A673 (cell line): ENCODE measurements at regions of chr9 and their contacts with region 1.

Region 1: GRCh38 chr9:69932901-69933300 is 110.7 kb upstream of the MAMDC2 start:
- DNase-seq: peak; percentile 60
- H3K4me3 ChIP-seq: no peak overlapping the region
- H3K27ac ChIP-seq: no peak overlapping the region
- H3K4me1 ChIP-seq: no peaks in the 10 kb centered on the region
- H3K27me3 ChIP-seq: peaks cover 3% of the 10 kb centered on the region
- CTCF ChIP-seq: peak; percentile 55

Region 2: GRCh38 chr9:69056191-69056815 is 876.6 kb before region 1 on chr9:
- CTCF ChIA-PET with region 1: interaction called, 7 read pairs
- POLR2A ChIA-PET with region 1: no interaction called
- intact Hi-C with region 1: loop called (anchors 5 kb)
- DNase-seq: no peak
- H3K4me3 ChIP-seq: no peak overlapping the region
- H3K27ac ChIP-seq: no peak overlapping the region
- H3K4me1 ChIP-seq: no peaks in the 10 kb centered on the region
- H3K27me3 ChIP-seq: no peaks in the 10 kb centered on the region
- CTCF ChIP-seq: no peak

Region 3: DNA sequence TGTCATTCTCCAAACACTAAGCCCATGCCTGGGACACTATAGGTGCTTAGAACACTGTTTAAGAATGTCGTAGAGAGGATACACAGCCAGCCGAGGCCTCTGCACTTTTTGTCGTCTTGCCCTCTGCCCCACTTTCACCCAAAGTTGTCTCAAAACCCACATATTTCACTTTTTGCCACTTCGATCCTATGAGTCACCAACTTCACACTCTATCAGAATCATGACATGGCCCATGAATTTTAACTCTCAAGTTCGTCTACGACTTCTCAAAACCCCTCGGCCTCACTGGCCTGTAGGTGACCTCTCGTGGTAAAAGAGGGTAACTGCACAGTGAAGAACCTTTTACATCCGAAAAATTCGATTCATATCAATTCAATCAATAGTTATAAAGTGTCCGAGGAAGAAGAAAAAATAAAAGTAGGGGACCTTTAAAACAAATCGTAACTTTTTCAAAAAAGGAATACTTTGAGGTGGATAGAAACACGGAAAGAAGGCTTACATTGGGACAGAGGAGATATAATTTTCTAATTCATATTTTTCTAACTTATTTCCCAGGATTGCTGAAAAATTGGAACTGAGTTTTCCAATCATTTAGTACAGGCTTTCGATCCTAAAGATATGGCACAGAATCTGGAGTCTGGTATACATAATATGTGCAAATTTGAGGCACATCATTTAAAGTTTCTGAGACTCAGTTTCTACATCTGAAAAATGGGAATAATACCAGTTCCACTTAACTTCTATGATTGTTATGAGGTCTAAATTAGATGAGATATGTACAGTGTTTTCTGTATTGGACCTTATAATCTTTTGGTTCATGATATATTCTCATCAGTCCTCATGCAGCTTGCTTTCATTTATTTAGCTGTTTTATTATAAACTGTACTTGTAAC is 383.3 kb before region 1 on chr9:
- CTCF ChIA-PET with region 1: no interaction called
- POLR2A ChIA-PET with region 1: interaction called, 5 read pairs
- intact Hi-C with region 1: loop called (anchors 5 kb)
- DNase-seq: peak; percentile 58
- H3K4me3 ChIP-seq: no peak overlapping the region
- H3K27ac ChIP-seq: no peak overlapping the region
- H3K4me1 ChIP-seq: no peaks in the 10 kb centered on the region
- H3K27me3 ChIP-seq: peaks cover 42% of the 10 kb centered on the region
- CTCF ChIP-seq: peak; percentile 82

Region 4: GRCh38 chr9:69885474-69885929 is 47.4 kb before region 1 on chr9:
- CTCF ChIA-PET with region 1: no interaction called
- POLR2A ChIA-PET with region 1: no interaction called
- intact Hi-C with region 1: no loop called
- DNase-seq: no peak
- H3K4me3 ChIP-seq: no peak overlapping the region
- H3K27ac ChIP-seq: no peak overlapping the region
- H3K4me1 ChIP-seq: no peaks in the 10 kb centered on the region
- H3K27me3 ChIP-seq: no peaks in the 10 kb centered on the region
- CTCF ChIP-seq: no peak

Region 5: DNA sequence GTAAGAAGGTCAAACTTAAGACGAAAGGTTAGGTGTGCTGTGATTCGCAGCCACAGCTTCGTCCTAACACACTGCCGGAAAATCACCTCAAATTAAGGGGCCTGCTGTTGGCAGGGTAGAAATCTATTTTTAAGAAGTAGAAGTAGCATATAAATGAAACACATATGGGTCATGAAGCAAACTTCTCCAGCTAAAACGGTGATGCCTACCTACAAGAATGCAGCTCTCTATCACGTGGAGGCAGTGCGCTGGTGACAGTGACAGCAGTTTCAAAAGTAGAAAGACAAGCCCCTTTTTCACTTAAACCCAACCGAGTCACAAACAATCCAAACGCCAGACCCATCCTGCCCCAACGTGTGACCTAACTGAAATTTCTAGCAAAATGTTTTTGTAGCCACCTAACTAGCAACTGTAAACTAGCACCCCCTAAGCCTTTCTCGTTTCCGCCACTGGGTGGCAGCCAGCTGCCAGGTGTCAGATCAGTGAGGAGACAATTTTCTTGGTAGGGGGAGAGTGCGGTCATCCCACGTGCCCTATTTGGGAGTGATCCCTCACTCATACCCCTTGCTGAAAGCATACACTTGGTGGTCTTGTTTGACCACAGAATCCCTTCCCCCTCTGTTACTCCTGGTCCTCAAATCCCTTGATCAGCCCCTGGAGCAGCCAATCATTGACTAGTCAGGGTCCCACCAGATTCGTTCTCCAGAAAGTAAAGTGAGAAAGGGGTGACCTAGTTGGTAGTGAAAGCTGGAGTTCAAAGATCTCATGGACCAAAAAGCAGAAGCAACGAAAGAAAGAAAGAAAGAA is 38.9 kb after region 1 on chr9:
- CTCF ChIA-PET with region 1: no interaction called
- POLR2A ChIA-PET with region 1: no interaction called
- intact Hi-C with region 1: loop called (anchors 5 kb)
- DNase-seq: peak; percentile 60
- H3K4me3 ChIP-seq: no peak overlapping the region
- H3K27ac ChIP-seq: no peak overlapping the region
- H3K4me1 ChIP-seq: no peaks in the 10 kb centered on the region
- H3K27me3 ChIP-seq: no peaks in the 10 kb centered on the region
- CTCF ChIP-seq: peak; percentile 85

Region 6: GRCh38 chr9:70232476-70232875 is 299.6 kb after region 1 on chr9:
- CTCF ChIA-PET with region 1: no interaction called
- POLR2A ChIA-PET with region 1: no interaction called
- intact Hi-C with region 1: no loop called
- DNase-seq: no peak
- H3K4me3 ChIP-seq: no peak overlapping the region
- H3K27ac ChIP-seq: no peak overlapping the region
- H3K4me1 ChIP-seq: no peaks in the 10 kb centered on the region
- H3K27me3 ChIP-seq: no peaks in the 10 kb centered on the region
- CTCF ChIP-seq: no peak